Psoas muscle (tissue), 8 donors: ENCODE measurements at regions of chr7 and their contacts with region 1.

Region 1: DNA sequence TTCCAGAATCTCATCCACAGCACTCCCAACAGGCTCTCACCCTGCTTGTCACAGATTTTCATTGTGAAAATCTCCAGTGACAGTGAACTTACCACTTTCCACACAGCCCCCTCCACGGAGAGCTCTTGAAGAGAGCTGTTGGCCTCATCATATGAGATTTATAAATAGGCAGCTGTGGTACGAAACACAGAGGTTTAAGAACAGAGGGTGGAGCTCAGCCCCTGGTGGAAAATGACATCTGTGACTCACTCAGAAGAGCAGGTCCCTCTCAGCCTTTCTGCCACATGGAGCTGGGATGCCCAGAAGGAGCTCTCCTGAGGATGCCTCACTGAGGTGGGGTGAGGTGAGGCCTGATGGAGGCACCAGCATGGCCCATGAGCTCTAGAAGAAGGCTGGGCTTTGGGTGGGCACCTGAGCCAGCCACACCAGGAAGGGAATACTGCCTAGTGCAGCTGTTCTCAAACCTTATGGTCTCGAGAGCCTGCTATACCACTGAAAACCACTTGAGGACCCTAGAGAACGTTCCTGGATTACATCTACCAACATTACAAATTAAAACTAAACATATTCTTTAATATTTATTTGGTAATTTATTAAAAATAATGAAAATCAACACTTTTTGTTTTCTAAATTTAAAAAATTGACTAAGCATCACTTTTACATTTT is 25.8 kb upstream of the EEPD1 start:
- DNase-seq: peak in 1 of 2 donors; percentile 58
- ATAC-seq: peak; percentile 19 to 64 (median 56)
- H3K4me3 ChIP-seq: no peak overlapping the region
- H3K27ac ChIP-seq: peak overlapping the region; percentile 95
- H3K4me1 ChIP-seq: peaks cover 49% of the 10 kb centered on the region
- H3K27me3 ChIP-seq: no peaks in the 10 kb centered on the region
- CTCF ChIP-seq: peak; percentile 50

Region 2: GRCh38 chr7:35003679-35004303 is 1123.4 kb before region 1 on chr7:
- intact Hi-C with region 1: no loop called
- DNase-seq: no peak
- ATAC-seq: peak in 2 of 4 donors; percentile 28 to 30
- H3K4me3 ChIP-seq: no peak overlapping the region
- H3K27ac ChIP-seq: no peak overlapping the region
- H3K4me1 ChIP-seq: no peaks in the 10 kb centered on the region
- H3K27me3 ChIP-seq: no peaks in the 10 kb centered on the region
- CTCF ChIP-seq: no peak

Region 3: GRCh38 chr7:36148422-36149065 is 21.3 kb after region 1 on chr7:
- intact Hi-C with region 1: loop called in 1 of 2 experiments (anchors 2 kb)
- DNase-seq: no peak
- ATAC-seq: no peak
- H3K4me3 ChIP-seq: no peak overlapping the region
- H3K27ac ChIP-seq: no peak overlapping the region
- H3K4me1 ChIP-seq: no peaks in the 10 kb centered on the region
- H3K27me3 ChIP-seq: no peaks in the 10 kb centered on the region
- CTCF ChIP-seq: no peak